Endothelial cell of umbilical vein (primary cell): ENCODE measurements at regions of chr1 and their contacts with region 1.

Region 1: GRCh38 chr1:7646981-7647901 is 123.9 kb upstream of the VAMP3 start:
- DNase-seq: peak; percentile 36
- H3K4me3 ChIP-seq: no peak overlapping the region
- H3K27ac ChIP-seq: no peak overlapping the region
- H3K4me1 ChIP-seq: peaks cover 3% of the 10 kb centered on the region
- H3K27me3 ChIP-seq: no peaks in the 10 kb centered on the region
- CTCF ChIP-seq: peak; percentile 90 to 91
- POLR2A ChIP-seq: no peak

Region 2: GRCh38 chr1:6794164-6794563 is 853.1 kb before region 1 on chr1:
- CTCF ChIA-PET with region 1: interaction called, 4 read pairs
- POLR2A ChIA-PET with region 1: no interaction called
- dilution Hi-C with region 1: no loop called
- intact Hi-C with region 1: loop called (anchors 2 kb)
- DNase-seq: peak; percentile 71
- H3K4me3 ChIP-seq: no peak overlapping the region
- H3K27ac ChIP-seq: no peak overlapping the region
- H3K4me1 ChIP-seq: peaks cover 29% of the 10 kb centered on the region
- H3K27me3 ChIP-seq: no peaks in the 10 kb centered on the region
- CTCF ChIP-seq: peak in 1 of 2 donors; percentile 16
- POLR2A ChIP-seq: no peak

Region 3: DNA sequence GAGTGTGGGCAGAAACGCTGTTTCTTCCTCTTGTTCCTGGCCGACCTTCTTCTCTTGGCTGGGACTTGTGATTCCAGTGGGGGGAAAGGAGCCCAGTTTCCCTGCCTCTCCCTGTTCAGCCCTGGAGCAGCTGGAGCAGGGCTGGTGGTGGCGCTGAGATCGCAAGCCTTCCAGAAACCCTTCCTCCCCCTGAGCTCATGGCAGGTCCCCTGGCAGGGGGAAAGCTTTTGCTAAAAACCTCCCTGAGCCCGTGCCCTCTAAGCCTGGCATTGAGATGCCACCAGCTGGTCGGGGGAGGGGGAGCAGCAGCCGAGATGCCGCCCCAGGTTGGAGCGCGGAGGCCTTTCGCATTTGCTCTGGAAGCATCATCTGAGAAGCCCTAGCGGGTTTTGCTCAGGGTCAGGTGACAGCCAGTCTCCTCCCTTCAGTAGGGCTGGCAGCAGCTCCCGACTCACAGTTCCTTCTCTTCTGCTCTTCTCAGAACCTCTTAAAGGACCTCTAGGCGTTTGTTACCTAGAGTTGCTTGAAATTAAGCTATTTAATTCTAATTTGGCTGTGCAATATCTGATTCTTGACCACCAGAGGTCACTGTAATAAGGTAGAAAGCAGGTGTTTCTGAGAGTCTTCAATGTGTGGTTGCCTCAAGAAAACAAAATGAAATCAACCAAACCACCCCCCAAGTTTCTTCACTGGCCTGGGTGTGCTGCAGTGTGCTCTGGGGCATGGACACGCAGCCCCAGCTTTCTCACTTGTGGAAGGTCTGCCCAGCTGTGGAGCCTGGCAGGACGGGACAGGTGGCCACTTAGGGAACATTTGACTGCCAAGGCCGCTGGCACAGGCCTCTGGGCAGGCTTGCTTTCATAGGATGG is 604.7 kb before region 1 on chr1:
- CTCF ChIA-PET with region 1: interaction called, 112 read pairs
- POLR2A ChIA-PET with region 1: no interaction called
- dilution Hi-C with region 1: no loop called
- intact Hi-C with region 1: loop called (anchors 1 kb)
- DNase-seq: peak; percentile 31
- H3K4me3 ChIP-seq: no peak overlapping the region
- H3K27ac ChIP-seq: no peak overlapping the region
- H3K4me1 ChIP-seq: no peaks in the 10 kb centered on the region
- H3K27me3 ChIP-seq: no peaks in the 10 kb centered on the region
- CTCF ChIP-seq: peak; percentile 35 to 40
- POLR2A ChIP-seq: no peak

Region 4: DNA sequence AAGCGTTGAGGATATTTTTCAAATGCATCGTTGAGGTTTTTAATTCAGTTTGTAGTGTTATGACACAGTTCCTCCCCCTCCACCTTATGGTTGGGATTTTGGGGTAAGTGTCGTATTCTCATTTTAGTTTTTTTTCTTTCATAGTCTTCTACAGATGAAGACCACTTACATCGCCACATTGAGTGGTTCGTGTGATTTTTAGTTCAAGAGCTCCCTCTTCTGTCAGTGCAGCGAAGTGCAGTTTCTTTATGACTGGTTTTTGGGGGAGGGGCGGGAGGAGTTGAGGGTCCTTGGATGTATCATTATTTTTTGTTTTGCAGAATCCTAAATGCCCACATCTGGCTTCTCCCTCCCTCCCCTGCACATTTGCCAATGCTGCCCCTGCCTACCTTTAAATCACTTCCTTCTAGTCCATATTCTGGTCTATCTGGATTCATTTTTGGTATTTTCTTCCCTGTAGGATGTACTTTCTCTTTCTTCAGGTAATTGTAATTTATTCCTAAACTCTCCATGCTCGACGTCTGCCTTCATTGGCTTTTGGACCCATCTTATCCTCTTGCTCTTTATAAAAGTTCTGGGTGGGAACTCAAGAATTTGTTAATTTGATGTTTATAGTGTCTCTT is 428.9 kb before region 1 on chr1:
- CTCF ChIA-PET with region 1: interaction called, 4 read pairs
- POLR2A ChIA-PET with region 1: no interaction called
- dilution Hi-C with region 1: no loop called
- intact Hi-C with region 1: loop called (anchors 1 kb)
- DNase-seq: peak; percentile 62
- H3K4me3 ChIP-seq: no peak overlapping the region
- H3K27ac ChIP-seq: no peak overlapping the region
- H3K4me1 ChIP-seq: no peaks in the 10 kb centered on the region
- H3K27me3 ChIP-seq: no peaks in the 10 kb centered on the region
- CTCF ChIP-seq: peak; percentile 66 to 74
- POLR2A ChIP-seq: no peak

Region 5: DNA sequence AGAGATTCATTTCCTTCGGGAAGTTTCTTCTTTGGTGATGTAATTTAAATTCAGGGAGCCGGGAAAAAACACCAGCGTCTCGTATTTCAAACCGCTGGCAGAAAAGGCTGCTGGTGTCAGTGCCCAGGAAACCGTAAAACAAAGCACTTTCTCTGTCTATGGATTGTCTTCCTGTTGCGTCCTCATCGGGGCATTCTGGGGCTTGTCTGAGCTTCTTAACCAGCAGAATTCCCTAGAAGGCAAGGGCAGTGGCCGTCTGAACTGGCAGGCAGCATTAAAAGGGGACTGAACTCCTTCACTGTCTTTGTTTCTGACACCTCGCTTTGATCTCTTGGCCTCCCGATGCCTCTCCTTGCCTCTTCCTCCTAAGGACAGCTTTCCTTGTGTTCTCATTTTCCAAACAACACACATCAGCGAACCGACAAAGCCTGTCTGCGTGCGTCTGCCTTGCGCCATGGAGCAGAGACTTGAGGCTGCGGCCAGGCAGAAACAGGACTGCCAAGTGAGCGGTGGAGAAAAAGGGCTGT is 267.7 kb before region 1 on chr1:
- CTCF ChIA-PET with region 1: no interaction called
- POLR2A ChIA-PET with region 1: no interaction called
- dilution Hi-C with region 1: no loop called
- intact Hi-C with region 1: loop called (anchors 2 kb)
- DNase-seq: peak; percentile 94
- H3K4me3 ChIP-seq: peak overlapping the region in 1 of 3 experiments; percentile 2
- H3K27ac ChIP-seq: peak overlapping the region; percentile 75
- H3K4me1 ChIP-seq: peaks cover 23% of the 10 kb centered on the region
- H3K27me3 ChIP-seq: no peaks in the 10 kb centered on the region
- CTCF ChIP-seq: no peak
- POLR2A ChIP-seq: peak; percentile 54

Region 6: GRCh38 chr1:7539769-7540175 is 107.5 kb before region 1 on chr1:
- CTCF ChIA-PET with region 1: interaction called, 3 read pairs
- POLR2A ChIA-PET with region 1: no interaction called
- dilution Hi-C with region 1: no loop called
- intact Hi-C with region 1: loop called (anchors 1 kb)
- DNase-seq: peak; percentile 34
- H3K4me3 ChIP-seq: no peak overlapping the region
- H3K27ac ChIP-seq: no peak overlapping the region
- H3K4me1 ChIP-seq: no peaks in the 10 kb centered on the region
- H3K27me3 ChIP-seq: no peaks in the 10 kb centered on the region
- CTCF ChIP-seq: peak; percentile 48 to 62
- POLR2A ChIP-seq: no peak

Region 7: DNA sequence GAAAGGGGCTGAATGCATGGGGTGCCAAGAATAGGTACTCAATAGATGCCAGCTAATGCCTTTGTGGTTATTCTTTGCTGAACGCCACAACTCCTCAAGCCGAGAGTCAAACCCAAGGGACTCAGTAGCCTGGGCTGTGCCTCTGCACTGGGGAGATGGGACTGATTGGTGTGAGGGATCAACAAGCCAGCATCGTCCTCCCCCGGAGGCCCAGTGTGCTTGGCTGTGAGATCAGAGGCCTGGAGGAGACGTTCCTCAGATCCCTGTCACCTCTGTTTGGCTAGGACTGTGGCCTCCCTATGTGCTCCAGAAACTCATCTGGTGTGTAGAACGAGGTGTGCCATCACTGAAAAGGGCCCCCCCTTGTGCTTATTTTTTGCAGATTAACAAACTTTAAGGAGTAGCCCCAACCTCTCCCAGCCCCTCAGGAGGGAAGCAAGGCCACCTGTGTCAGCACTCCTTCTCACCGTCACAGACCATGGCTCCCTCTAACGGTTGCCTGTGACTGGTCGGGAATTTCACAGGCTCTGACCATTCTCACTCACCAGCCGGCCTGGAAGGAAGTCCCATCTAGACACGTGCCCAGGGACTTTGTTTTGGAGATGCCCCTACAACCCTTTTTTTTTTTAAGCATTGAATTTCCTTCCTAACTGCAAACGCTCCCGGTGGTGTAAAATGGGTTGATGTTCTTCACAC is 70.1 kb before region 1 on chr1:
- CTCF ChIA-PET with region 1: interaction called, 15 read pairs
- POLR2A ChIA-PET with region 1: no interaction called
- dilution Hi-C with region 1: no loop called
- intact Hi-C with region 1: loop called (anchors 1 kb)
- DNase-seq: peak; percentile 43
- H3K4me3 ChIP-seq: no peak overlapping the region
- H3K27ac ChIP-seq: no peak overlapping the region
- H3K4me1 ChIP-seq: no peaks in the 10 kb centered on the region
- H3K27me3 ChIP-seq: no peaks in the 10 kb centered on the region
- CTCF ChIP-seq: peak; percentile 17 to 53
- POLR2A ChIP-seq: no peak

Region 8: DNA sequence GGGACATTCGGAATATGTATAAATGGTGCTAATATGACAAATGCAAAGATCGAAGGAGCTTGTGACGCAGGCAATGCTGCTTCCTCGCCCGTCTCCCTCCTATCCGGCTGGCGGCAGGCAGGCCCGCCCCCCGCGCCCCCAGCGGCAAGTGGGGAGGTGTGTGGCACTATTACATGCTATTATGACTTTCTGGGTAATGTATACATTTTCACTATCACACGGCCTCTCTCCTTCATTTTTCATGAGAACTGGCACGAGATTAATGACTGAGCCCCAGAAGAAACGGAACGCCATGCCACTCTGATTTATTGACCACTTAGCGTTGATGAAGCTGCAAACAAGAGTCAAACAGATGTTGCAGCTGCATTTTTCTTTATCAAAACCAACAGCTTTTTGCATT is 15.1 kb before region 1 on chr1:
- CTCF ChIA-PET with region 1: no interaction called
- POLR2A ChIA-PET with region 1: no interaction called
- dilution Hi-C with region 1: no loop called
- intact Hi-C with region 1: no loop called
- DNase-seq: no peak
- H3K4me3 ChIP-seq: no peak overlapping the region
- H3K27ac ChIP-seq: no peak overlapping the region
- H3K4me1 ChIP-seq: no peaks in the 10 kb centered on the region
- H3K27me3 ChIP-seq: no peaks in the 10 kb centered on the region
- CTCF ChIP-seq: no peak
- POLR2A ChIP-seq: no peak